ENCODE measurements at regions of chr5 and their contacts with region 1.

Region 1: GRCh38 chr5:119360905-119361593 is 5.2 kb downstream of the TNFAIP8 start:
- DNase-seq: peak; percentile 95
- H3K4me3 Mint-ChIP-seq: peak overlapping the region; percentile 44
- H3K27ac Mint-ChIP-seq: peak overlapping the region; percentile 80
- H3K4me1 Mint-ChIP-seq: peaks cover 81% of the 10 kb centered on the region
- H3K27me3 Mint-ChIP-seq: no peaks in the 10 kb centered on the region
- CTCF ChIP-seq: no peak

Region 2: GRCh38 chr5:119070828-119071572 is 290.0 kb before region 1 on chr5 and contains the start of gene DMXL1:
- CTCF ChIA-PET with region 1: no interaction called
- POLR2A ChIA-PET with region 1: interaction called, 29 read pairs
- intact Hi-C with region 1: loop called (anchors 2 kb)
- DNase-seq: peak; percentile 100
- H3K4me3 Mint-ChIP-seq: peak within 1 kb of the TSS; percentile 77
- H3K27ac Mint-ChIP-seq: peak within 1 kb of the TSS; percentile 79
- H3K4me1 Mint-ChIP-seq: peaks cover 24% of the 10 kb centered on the region
- H3K27me3 Mint-ChIP-seq: no peaks in the 10 kb centered on the region
- CTCF ChIP-seq: no peak
- total RNA-seq, gene DMXL1: 38.1 and 45.1 TPM in 2 replicates

Region 3: GRCh38 chr5:119322948-119323537 is 38.0 kb before region 1 on chr5:
- CTCF ChIA-PET with region 1: interaction called, 161 read pairs
- POLR2A ChIA-PET with region 1: interaction called, 385 read pairs
- intact Hi-C with region 1: loop called (anchors 1 kb)
- DNase-seq: peak; percentile 54
- H3K4me3 Mint-ChIP-seq: no peak overlapping the region
- H3K27ac Mint-ChIP-seq: peak overlapping the region; percentile 98
- H3K4me1 Mint-ChIP-seq: peaks cover 44% of the 10 kb centered on the region
- H3K27me3 Mint-ChIP-seq: no peaks in the 10 kb centered on the region
- CTCF ChIP-seq: no peak

Region 4: DNA sequence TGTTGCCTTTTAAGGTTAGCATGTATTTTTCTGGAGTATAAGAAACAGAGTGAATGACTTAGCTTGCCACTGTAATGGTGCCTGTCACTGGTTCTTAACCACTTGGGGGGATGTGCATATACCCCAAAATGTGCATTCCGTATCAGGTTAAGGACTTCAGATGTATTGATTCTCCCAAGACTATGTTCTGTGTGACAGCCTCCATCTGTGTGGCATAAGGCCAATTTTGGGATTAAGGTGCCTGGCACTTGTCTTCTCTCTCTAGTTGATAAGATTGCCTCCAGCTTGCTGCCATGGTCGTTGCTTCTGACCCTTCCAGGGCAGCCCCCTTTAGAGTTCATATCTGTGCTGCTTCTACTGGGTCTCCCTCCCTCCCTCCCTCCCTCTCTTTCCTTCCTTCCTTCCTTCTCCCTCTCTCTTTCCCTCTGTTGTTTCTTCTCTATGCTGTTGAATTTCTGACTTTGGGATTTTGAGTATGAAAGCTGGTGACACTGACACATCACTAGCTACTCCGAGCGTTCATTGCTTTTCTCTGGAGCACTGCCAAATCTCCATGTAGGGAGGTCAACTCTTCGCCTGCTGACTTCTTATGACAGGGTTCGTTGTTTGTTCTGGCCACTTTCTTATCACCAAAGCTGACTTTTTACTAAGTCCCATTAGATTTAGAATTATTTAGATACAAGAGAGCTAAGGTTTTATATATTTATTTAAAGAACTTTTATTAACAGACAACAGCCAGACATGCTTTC is 25.7 kb after region 1 on chr5:
- CTCF ChIA-PET with region 1: interaction called, 5 read pairs
- POLR2A ChIA-PET with region 1: interaction called, 492 read pairs
- intact Hi-C with region 1: no loop called
- DNase-seq: peak; percentile 45
- H3K4me3 Mint-ChIP-seq: no peak overlapping the region
- H3K27ac Mint-ChIP-seq: peak overlapping the region; percentile 76
- H3K4me1 Mint-ChIP-seq: peaks cover 53% of the 10 kb centered on the region
- H3K27me3 Mint-ChIP-seq: no peaks in the 10 kb centered on the region
- CTCF ChIP-seq: no peak

Region 5: GRCh38 chr5:119418531-119419116 is 57.6 kb after region 1 on chr5:
- CTCF ChIA-PET with region 1: interaction called, 132 read pairs
- POLR2A ChIA-PET with region 1: interaction called, 174 read pairs
- intact Hi-C with region 1: no loop called
- DNase-seq: no peak
- H3K4me3 Mint-ChIP-seq: no peak overlapping the region
- H3K27ac Mint-ChIP-seq: no peak overlapping the region
- H3K4me1 Mint-ChIP-seq: peaks cover 32% of the 10 kb centered on the region
- H3K27me3 Mint-ChIP-seq: no peaks in the 10 kb centered on the region
- CTCF ChIP-seq: no peak

Region 6: DNA sequence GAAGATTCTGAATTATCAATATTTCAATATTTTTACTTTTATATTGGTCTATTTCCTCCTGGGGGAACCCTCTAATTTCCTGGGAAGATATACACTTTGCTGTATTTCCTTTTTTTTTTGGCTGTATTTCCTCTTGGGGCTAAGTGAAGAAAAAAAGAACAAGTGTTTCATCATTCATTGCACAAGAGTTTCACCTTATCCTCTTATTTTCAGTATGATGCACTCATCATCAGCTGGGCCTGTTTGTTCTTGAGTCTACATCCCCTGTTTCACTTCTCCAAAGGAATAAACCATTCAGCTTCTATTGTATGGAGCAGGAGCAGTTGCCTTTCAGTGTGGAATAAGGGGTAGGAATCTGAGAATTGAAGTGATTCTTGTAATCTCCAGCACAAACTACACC is 479.1 kb after region 1 on chr5:
- CTCF ChIA-PET with region 1: no interaction called
- POLR2A ChIA-PET with region 1: no interaction called
- intact Hi-C with region 1: no loop called
- DNase-seq: peak; percentile 63
- H3K4me3 Mint-ChIP-seq: no peak overlapping the region
- H3K27ac Mint-ChIP-seq: no peak overlapping the region
- H3K4me1 Mint-ChIP-seq: no peaks in the 10 kb centered on the region
- H3K27me3 Mint-ChIP-seq: no peaks in the 10 kb centered on the region
- CTCF ChIP-seq: no peak

Measured in MCF 10A (cell line).